ENCODE measurements at regions of chr15 and their contacts with region 1.

Region 1: GRCh38 chr15:82809404-82810060 is at the start of gene WHAMM:
- DNase-seq: peak; percentile 95 to 97
- H3K4me3 ChIP-seq: peak within 1 kb of the TSS; percentile 99
- H3K27ac ChIP-seq: peak within 1 kb of the TSS; percentile 80
- H3K4me1 ChIP-seq: peaks cover 17% of the 10 kb centered on the region
- H3K27me3 ChIP-seq: no peaks in the 10 kb centered on the region
- CTCF ChIP-seq: no peak
- total RNA-seq, gene WHAMM: 6.4 and 6.9 TPM in 2 replicates

Region 2: GRCh38 chr15:82749951-82750830 is 59.3 kb before region 1 on chr15:
- CTCF ChIA-PET with region 1: interaction called, 4 read pairs
- POLR2A ChIA-PET with region 1: interaction called, 4 read pairs
- intact Hi-C with region 1: loop called (anchors 2 kb)
- DNase-seq: peak; percentile 84 to 89
- H3K4me3 ChIP-seq: peak overlapping the region; percentile 83
- H3K27ac ChIP-seq: peak overlapping the region; percentile 74
- H3K4me1 ChIP-seq: peaks cover 25% of the 10 kb centered on the region
- H3K27me3 ChIP-seq: no peaks in the 10 kb centered on the region
- CTCF ChIP-seq: no peak

Region 3: DNA sequence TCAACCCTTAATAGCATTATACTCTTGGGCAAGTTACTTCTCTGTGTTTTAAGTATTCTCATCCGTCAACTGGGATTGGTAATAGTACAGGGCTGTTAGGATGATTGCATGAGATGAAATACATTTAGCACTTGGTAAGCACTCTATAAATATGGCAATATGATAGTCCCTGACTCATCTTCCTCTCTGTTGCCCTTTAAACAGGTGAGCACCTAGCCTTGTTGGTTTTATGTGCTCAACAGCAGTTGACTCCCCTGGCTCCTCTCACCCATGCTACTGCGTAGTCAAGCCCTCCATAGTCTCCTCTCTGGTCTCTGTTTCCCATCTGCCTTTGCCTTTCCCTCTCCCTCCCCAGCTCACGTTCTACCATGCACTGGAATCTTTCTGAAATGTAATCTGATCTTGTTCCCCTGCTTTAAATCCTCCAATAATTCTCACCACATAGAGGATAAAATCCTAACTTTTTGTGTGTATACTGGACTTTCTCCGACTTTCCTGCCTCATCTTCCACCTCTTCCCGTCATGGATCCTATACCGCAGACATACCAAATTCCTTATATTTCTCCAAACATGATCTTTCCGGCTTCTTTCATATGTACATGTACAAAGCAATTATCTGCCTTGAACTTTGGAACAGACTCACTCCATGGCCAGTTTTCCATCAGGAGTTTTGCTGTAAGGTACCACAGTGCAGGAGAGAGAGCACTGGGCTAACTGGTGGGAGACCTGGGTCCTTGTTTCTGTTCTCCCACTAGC is 46.0 kb before region 1 on chr15:
- CTCF ChIA-PET with region 1: no interaction called
- POLR2A ChIA-PET with region 1: no interaction called
- intact Hi-C with region 1: no loop called
- DNase-seq: no peak
- H3K4me3 ChIP-seq: no peak overlapping the region
- H3K27ac ChIP-seq: no peak overlapping the region
- H3K4me1 ChIP-seq: peaks cover 3% of the 10 kb centered on the region; the same call in 1 of the 2 replicates
- H3K27me3 ChIP-seq: no peaks in the 10 kb centered on the region
- CTCF ChIP-seq: no peak

Region 4: GRCh38 chr15:82966671-82967071 is 157.1 kb after region 1 on chr15:
- CTCF ChIA-PET with region 1: no interaction called
- POLR2A ChIA-PET with region 1: no interaction called
- intact Hi-C with region 1: no loop called
- DNase-seq: no peak
- H3K4me3 ChIP-seq: no peak overlapping the region
- H3K27ac ChIP-seq: no peak overlapping the region
- H3K4me1 ChIP-seq: no peaks in the 10 kb centered on the region
- H3K27me3 ChIP-seq: no peaks in the 10 kb centered on the region; the same call in 1 of the 2 replicates
- CTCF ChIP-seq: no peak

Measured in PC-9 (cell line).